Ovary (tissue), 10 donors: ENCODE measurements at regions of chr5 and their contacts with region 1.

Region 1: DNA sequence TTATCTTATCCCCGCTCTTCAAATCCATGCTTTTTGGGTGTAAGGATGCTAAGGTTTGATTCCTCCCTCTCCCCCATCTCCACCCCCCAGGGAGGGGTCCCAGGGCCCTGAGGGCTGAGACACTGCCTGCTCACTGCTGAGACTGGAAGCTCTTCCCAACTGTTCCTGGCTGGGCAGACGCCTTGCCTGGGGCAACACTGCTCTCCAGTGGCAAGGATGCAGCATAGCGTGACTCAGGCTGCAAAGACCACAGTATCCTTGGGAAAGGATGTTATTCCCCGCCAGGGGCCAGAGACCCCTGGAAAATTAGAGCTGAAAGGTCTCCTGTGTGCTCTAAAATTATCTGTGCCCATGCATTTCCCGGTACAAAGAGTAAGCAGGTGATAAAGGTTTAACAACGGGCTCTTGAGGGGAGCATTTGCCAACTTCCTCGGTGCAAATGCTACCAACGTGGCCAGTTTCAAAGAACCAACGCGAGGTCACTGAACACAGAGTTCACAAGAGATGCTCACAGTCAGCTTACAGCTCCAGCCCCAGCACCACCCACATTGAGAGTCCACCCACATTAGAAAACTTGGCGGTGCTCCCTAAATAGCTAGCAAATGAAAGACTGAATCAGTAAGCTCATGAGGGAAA is 271.9 kb downstream of the NSG2 start:
- DNase-seq: peak in 3 of 5 donors; percentile 28 to 53 (median 29)
- H3K4me3 ChIP-seq: no peak overlapping the region
- H3K27ac ChIP-seq: no peak overlapping the region
- H3K4me1 ChIP-seq: no peaks in the 10 kb centered on the region
- H3K27me3 ChIP-seq: no peaks in the 10 kb centered on the region
- CTCF ChIP-seq: peak in 1 of 3 donors; percentile 27
- EP300 ChIP-seq: no peak
- POLR2A ChIP-seq: no peak

Region 2: GRCh38 chr5:174045470-174046025 is 271.8 kb before region 1 on chr5 and contains the start of gene NSG2:
- intact Hi-C with region 1: loop called in 2 of 4 experiments (anchors 2 to 10 kb)
- DNase-seq: peak; percentile 30 to 88 (median 47)
- H3K4me3 ChIP-seq: no peak within 1 kb of the TSS
- H3K27ac ChIP-seq: no peak within 1 kb of the TSS
- H3K4me1 ChIP-seq: no peaks in the 10 kb centered on the region
- H3K27me3 ChIP-seq: no peaks in the 10 kb centered on the region
- CTCF ChIP-seq: peak in 1 of 3 donors; percentile 34
- EP300 ChIP-seq: no peak
- POLR2A ChIP-seq: no peak
- total RNA-seq, gene NSG2: not detected

Region 3: DNA sequence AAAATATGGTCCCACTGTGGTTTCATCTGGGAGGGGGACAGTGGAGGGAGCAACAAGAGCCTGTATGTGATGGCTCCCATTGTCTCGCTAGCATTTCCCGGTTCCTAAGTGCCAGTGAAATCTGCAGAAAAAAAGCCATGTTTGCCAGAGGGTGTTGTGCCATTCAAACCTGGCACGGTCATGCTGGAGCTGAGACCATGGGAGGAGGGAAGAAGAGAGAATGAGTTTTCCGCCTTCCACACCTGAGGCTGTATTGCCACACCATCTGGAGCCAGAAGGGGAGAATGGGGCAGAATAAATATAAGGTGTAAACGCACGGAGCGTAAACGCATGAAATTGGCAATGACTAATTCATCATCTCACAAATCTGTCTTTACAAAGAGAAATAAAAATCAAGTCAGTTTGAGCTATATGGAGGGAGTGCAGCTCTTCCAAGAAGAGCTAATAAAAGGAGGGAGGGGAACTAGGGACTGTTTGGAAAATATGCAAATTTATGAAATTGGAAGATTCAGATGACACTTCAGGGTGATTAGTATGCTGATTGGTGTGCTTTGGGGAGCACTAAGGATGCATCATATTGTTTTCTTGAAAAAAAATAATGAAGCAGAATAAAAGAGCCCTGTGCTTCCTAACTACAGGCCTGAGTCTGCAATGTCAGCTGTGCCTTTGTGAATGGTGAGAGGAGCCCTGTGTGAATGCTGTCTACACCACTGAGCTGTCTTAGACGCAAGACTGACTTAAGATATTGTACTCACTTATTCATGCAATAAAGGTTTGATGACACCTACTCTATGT is 34.0 kb before region 1 on chr5:
- intact Hi-C with region 1: no loop called
- DNase-seq: no peak
- H3K4me3 ChIP-seq: no peak overlapping the region
- H3K27ac ChIP-seq: no peak overlapping the region
- H3K4me1 ChIP-seq: no peaks in the 10 kb centered on the region
- H3K27me3 ChIP-seq: no peaks in the 10 kb centered on the region
- CTCF ChIP-seq: no peak
- EP300 ChIP-seq: no peak
- POLR2A ChIP-seq: no peak